ENCODE measurements at regions of chr9 and their contacts with region 1.

Region 1: DNA sequence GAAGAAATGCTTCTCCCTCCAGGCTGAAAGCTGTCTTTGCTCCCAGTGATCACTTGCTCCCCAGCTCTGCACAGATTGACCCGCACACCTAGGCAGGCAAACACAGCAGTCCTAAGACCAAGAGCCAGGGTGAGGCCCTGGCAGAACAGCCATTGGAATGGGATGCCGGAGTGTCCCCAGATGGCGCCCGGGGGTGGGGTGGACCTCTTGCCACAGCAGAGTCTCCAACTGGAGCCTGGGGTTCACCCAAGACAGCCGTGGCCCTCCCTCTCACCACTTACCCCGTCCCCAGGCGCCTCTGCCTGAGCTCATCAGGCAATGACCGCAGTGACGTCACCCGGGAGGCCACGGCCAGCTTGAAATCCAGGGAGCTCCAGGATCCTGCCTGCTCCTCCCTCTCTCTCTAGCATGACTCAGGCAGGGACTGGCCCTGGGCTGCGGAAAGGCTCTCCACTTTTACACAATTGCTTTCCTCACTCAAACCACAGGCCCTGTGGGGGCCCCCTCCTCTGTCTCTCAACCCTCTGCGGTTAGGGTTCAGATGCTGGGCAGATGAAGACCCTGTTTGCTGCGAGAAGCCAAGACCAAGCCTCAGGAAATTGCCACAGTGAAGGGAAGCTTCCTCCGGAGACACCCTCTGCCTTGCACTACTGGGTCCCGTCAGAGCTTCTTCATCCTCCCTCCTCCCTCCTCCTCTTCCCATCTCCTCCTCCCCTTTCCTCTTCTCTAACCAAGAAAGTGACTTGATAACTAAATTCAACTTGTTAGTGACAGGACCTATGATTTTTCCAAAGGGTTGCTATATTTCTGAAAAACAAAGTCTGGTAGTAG is 24.3 kb upstream of the PTGES start:
- H3K4me3 ChIP-seq: peak overlapping the region; percentile 18
- H3K27ac ChIP-seq: no peak overlapping the region
- H3K4me1 ChIP-seq: no peaks in the 10 kb centered on the region
- CTCF ChIP-seq: no peak

Region 2: DNA sequence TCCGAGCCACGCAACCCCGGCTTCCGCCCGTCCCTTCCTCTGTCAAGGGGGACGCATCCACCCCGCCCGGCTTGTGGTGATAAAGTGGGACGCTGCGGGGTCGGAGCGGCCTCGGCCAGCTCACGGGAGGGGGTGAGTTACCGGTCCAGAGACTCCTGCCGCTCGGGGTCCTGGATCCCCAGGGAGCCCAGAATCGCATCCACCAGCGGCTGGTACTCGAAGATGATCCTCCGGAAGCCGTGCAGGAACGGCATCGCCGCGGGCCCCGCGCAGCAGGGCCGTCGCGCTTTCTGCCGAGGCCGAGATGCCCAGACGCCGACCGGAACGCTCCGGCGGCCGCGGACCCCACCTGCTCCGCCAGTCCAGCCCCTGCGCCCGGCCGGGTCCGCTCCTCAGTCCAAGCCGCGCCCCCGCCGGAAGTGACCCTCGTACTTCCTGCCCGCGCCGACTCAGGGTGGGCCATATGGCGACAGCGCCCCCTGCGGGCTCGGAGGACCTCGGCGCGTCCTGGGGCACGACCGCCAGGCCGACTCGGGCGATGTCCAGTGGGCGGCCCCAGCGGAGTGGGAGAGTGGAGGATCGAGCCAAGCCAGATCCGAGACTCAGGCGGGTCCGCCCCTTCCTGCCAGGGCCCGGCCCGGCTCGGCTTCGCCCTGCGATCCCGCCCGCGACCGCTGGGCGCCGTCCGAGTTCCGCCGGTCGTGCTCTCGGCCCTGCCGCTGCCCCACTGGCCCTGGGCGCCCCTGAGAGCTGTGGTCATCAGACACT is 135.2 kb before region 1 on chr9 and contains the start of gene ASB6:
- CTCF ChIA-PET with region 1: interaction called, 30 read pairs
- POLR2A ChIA-PET with region 1: interaction called, 3 read pairs
- H3K4me3 ChIP-seq: peak within 1 kb of the TSS; percentile 79
- H3K27ac ChIP-seq: peak within 1 kb of the TSS; percentile 70
- H3K4me1 ChIP-seq: peaks cover 11% of the 10 kb centered on the region
- CTCF ChIP-seq: peak; percentile 100

Region 3: GRCh38 chr9:129669141-129669718 is 107.9 kb before region 1 on chr9:
- CTCF ChIA-PET with region 1: no interaction called
- POLR2A ChIA-PET with region 1: no interaction called
- H3K4me3 ChIP-seq: no peak overlapping the region
- H3K27ac ChIP-seq: no peak overlapping the region
- H3K4me1 ChIP-seq: no peaks in the 10 kb centered on the region
- CTCF ChIP-seq: no peak

Region 4: DNA sequence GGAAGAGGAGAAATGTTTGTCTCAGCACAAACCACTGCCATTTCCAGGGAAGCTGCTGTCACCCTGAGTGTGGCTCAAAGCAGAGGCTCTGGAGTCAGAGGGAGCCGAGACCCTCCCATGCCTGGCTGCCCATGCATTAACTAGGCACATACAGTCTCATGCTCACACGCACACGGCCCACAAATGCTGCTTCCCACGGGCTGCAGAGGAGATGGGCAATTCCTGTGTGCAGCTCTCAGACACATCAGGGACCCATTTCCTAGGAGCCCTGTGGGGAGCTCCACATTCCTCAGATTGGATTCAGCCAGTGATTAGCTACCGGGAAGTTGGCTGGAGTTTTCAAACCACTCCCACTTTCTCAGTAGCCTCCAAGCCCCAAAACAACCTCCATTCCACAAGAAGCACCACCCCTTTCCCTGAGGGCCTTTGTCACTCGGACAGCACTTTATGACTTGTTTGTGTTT is 15.2 kb before region 1 on chr9:
- CTCF ChIA-PET with region 1: interaction called, 7 read pairs
- POLR2A ChIA-PET with region 1: interaction called, 12 read pairs
- H3K4me3 ChIP-seq: no peak overlapping the region
- H3K27ac ChIP-seq: no peak overlapping the region
- H3K4me1 ChIP-seq: no peaks in the 10 kb centered on the region
- CTCF ChIP-seq: no peak

Region 5: GRCh38 chr9:129900263-129901027 is 123.3 kb after region 1 on chr9:
- CTCF ChIA-PET with region 1: no interaction called
- POLR2A ChIA-PET with region 1: no interaction called
- H3K4me3 ChIP-seq: no peak overlapping the region
- H3K27ac ChIP-seq: no peak overlapping the region
- H3K4me1 ChIP-seq: no peaks in the 10 kb centered on the region
- CTCF ChIP-seq: no peak

Region 6: GRCh38 chr9:130265431-130266235 is 488.5 kb after region 1 on chr9 and contains the start of gene HMCN2:
- CTCF ChIA-PET with region 1: no interaction called
- POLR2A ChIA-PET with region 1: no interaction called
- H3K4me3 ChIP-seq: peak within 1 kb of the TSS; percentile 32
- H3K27ac ChIP-seq: no peak within 1 kb of the TSS
- H3K4me1 ChIP-seq: no peaks in the 10 kb centered on the region
- CTCF ChIP-seq: no peak

Region 7: DNA sequence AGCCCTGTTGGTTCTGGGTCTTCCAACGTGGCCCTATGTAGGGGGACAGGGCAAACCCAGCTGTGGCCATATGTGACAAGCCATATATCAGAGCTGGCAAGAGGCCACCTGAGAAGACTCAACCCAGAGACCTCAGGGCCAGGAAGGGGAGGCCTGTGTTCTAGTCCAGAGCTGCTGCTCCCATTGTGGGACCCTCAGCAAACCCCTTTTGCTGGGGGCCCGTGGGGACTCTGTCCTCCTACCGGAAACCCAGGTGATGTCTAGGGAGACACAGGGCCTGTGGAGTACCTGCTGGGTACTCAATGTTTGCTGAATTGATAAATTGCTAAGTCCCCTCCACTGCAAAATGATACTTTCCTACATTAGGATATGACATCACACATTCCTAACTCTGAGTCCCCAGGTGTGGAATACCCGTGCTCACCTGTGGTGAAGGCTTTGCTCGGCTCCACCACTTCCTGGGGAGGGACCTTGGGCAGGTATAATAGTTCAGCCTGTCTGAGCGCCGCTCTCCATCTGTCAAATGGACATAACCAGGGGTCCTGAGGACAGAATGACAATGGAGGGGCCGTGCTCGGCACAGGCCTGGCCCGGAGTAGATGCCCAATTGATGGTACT is 629.2 kb after region 1 on chr9:
- CTCF ChIA-PET with region 1: no interaction called
- POLR2A ChIA-PET with region 1: no interaction called
- H3K4me3 ChIP-seq: no peak overlapping the region
- H3K27ac ChIP-seq: no peak overlapping the region
- H3K4me1 ChIP-seq: no peaks in the 10 kb centered on the region
- CTCF ChIP-seq: no peak